ENCODE measurements at regions of chr11 and their contacts with region 1.

Region 1: GRCh38 chr11:86456052-86456939 is 81.6 kb downstream of the CCDC81 start:
- DNase-seq: peak; percentile 12 to 76 (median 44)
- ATAC-seq: peak; percentile 74
- H3K4me3 ChIP-seq: no peak overlapping the region
- H3K4me3 Mint-ChIP-seq: no peak overlapping the region
- H3K27ac ChIP-seq: no peak overlapping the region
- H3K27ac Mint-ChIP-seq: no peak overlapping the region
- H3K4me1 ChIP-seq: no peaks in the 10 kb centered on the region
- H3K4me1 Mint-ChIP-seq: peaks cover 0 to 31% (median 4%) of the 10 kb centered on the region in 7 donors
- H3K27me3 ChIP-seq: no peaks in the 10 kb centered on the region
- H3K27me3 Mint-ChIP-seq: no peaks in the 10 kb centered on the region

Region 2: DNA sequence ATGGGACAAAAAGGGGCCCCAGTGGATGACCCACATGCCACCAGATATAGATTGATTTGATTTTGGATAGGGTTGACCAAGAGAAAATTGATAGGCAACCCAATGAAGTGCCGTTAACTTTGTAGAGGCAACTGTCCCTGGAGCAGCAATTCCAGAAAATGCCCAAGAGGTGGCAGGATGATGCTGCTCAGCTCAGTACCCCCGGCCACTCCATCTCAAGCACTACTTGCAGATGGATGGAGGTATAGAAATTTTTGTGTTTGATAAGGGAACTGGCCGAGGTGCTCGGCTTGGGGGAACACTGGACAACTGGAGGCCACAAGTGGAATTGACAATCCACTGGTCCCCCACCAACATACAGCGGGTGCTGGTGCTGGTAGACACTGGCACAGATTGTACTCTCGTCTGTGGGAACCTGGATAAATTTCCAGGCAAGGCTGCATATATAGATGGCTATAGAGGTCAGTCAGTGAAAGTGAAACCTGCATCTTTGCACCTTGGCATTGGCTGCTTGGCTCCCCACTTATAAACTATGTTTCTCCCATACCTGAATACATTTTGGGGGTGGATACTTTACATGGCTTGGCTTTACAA is 514.8 kb before region 1 on chr11:
- CTCF ChIA-PET with region 1: no interaction called
- POLR2A ChIA-PET with region 1: no interaction called
- intact Hi-C with region 1: loop called in 1 of 2 experiments (anchors 10 kb)
- DNase-seq: no peak
- ATAC-seq: peak; percentile 61
- H3K4me3 ChIP-seq: no peak overlapping the region
- H3K4me3 Mint-ChIP-seq: no peak overlapping the region
- H3K27ac ChIP-seq: no peak overlapping the region
- H3K27ac Mint-ChIP-seq: no peak overlapping the region
- H3K4me1 ChIP-seq: no peaks in the 10 kb centered on the region
- H3K4me1 Mint-ChIP-seq: peaks cover 0 to 10% (median 0%) of the 10 kb centered on the region in 7 donors
- H3K27me3 ChIP-seq: no peaks in the 10 kb centered on the region
- H3K27me3 Mint-ChIP-seq: no peaks in the 10 kb centered on the region

Region 3: GRCh38 chr11:86497181-86497701 is 40.9 kb after region 1 on chr11:
- CTCF ChIA-PET with region 1: no interaction called
- POLR2A ChIA-PET with region 1: no interaction called
- intact Hi-C with region 1: no loop called
- DNase-seq: no peak
- ATAC-seq: no peak
- H3K4me3 ChIP-seq: no peak overlapping the region
- H3K4me3 Mint-ChIP-seq: no peak overlapping the region
- H3K27ac ChIP-seq: no peak overlapping the region
- H3K27ac Mint-ChIP-seq: no peak overlapping the region
- H3K4me1 ChIP-seq: no peaks in the 10 kb centered on the region
- H3K4me1 Mint-ChIP-seq: peaks cover 0 to 2% (median 0%) of the 10 kb centered on the region in 7 donors
- H3K27me3 ChIP-seq: no peaks in the 10 kb centered on the region
- H3K27me3 Mint-ChIP-seq: peaks cover 0 to 3% (median 0%) of the 10 kb centered on the region in 5 donors

Region 4: DNA sequence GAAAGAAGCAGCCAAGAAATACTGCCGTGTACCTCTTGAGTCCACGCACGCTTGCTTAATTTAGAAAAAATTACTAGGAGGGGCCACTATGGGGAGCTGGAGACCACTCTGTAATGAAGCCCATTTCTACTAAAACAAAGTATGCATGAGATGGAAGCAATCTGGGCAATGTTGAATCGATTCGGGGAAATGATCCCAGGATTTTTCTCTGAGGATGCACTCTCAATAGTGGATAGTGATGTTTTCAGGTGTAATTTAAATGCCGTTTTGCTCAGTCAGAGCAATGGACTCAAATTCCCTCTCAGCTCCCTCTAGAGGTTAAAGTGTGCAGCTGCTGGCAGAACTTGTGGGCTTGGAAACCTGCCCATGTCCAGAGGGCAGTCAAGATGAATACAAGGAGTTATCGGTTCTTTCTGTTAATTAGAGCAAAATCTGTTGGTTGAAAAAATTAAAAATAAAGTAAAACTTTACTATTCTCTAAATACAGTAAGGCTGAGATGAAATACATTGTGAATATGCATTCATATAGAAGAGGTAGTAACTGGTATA is 152.0 kb after region 1 on chr11:
- CTCF ChIA-PET with region 1: interaction called, 3 read pairs
- POLR2A ChIA-PET with region 1: no interaction called
- intact Hi-C with region 1: loop called (anchors 1 kb)
- DNase-seq: peak in 2 of 9 donors; percentile 7 to 36
- ATAC-seq: peak; percentile 78
- H3K4me3 ChIP-seq: no peak overlapping the region
- H3K4me3 Mint-ChIP-seq: peak overlapping the region in 1 of 10 donors; percentile 16
- H3K27ac ChIP-seq: no peak overlapping the region
- H3K27ac Mint-ChIP-seq: no peak overlapping the region
- H3K4me1 ChIP-seq: no peaks in the 10 kb centered on the region
- H3K4me1 Mint-ChIP-seq: peaks cover 0 to 14% (median 7%) of the 10 kb centered on the region in 7 donors
- H3K27me3 ChIP-seq: no peaks in the 10 kb centered on the region
- H3K27me3 Mint-ChIP-seq: peaks cover 0 to 4% (median 0%) of the 10 kb centered on the region in 5 donors

Region 5: DNA sequence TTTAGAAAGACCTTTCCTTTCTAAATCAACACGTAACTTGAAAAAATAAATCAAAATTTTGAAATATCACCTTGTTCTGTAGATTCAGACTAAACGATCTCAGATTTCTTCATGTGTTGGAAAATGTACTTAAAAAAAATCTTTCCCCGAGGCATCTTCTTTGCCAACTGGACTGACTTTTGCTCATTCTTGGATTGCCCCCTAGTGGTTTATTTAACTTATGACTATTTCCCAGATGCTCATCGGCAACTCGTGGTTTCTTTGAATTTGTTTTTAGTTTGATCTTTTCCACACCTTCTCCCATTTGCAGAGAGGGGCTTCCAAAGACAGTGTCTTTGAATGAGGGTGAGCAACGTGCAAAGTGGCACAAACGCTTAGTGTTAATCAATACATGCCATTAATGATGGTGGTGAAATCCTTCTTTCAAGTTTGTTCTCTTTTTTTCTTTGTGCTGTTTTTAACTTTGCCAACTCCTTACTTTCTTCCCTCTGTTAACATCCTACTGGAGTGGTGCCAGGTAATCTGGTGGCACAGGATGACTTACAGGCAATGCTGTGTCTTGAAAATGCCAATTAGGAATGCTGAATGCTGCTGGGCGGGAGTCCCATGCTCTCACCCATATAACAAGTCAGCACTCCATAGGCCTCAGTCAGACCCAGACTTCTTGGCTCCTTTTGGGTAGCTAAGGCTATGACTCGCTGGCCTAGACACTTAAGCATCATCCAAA is 362.3 kb after region 1 on chr11:
- CTCF ChIA-PET with region 1: interaction called, 4 read pairs
- POLR2A ChIA-PET with region 1: no interaction called
- intact Hi-C with region 1: loop called (anchors 1 kb)
- DNase-seq: peak in 7 of 9 donors; percentile 13 to 42 (median 34)
- ATAC-seq: peak; percentile 56
- H3K4me3 ChIP-seq: no peak overlapping the region
- H3K4me3 Mint-ChIP-seq: no peak overlapping the region
- H3K27ac ChIP-seq: no peak overlapping the region
- H3K27ac Mint-ChIP-seq: peak overlapping the region in 1 of 9 donors; percentile 39
- H3K4me1 ChIP-seq: no peaks in the 10 kb centered on the region
- H3K4me1 Mint-ChIP-seq: peaks cover 0 to 7% (median 5%) of the 10 kb centered on the region in 7 donors
- H3K27me3 ChIP-seq: no peaks in the 10 kb centered on the region
- H3K27me3 Mint-ChIP-seq: peaks cover 3 to 31% (median 13%) of the 10 kb centered on the region in 5 donors

Region 6: GRCh38 chr11:86919557-86920210 is 463.4 kb after region 1 on chr11:
- CTCF ChIA-PET with region 1: no interaction called
- POLR2A ChIA-PET with region 1: no interaction called
- intact Hi-C with region 1: loop called (anchors 1 to 2 kb)
- DNase-seq: peak in 5 of 9 donors; percentile 2 to 23 (median 13)
- ATAC-seq: peak; percentile 31
- H3K4me3 ChIP-seq: no peak overlapping the region
- H3K4me3 Mint-ChIP-seq: no peak overlapping the region
- H3K27ac ChIP-seq: no peak overlapping the region
- H3K27ac Mint-ChIP-seq: no peak overlapping the region
- H3K4me1 ChIP-seq: peaks cover 0 to 4% of the 10 kb centered on the region in 2 donors
- H3K4me1 Mint-ChIP-seq: peaks cover 0 to 7% (median 4%) of the 10 kb centered on the region in 7 donors
- H3K27me3 ChIP-seq: no peaks in the 10 kb centered on the region
- H3K27me3 Mint-ChIP-seq: peaks cover 0 to 12% (median 0%) of the 10 kb centered on the region in 5 donors

Region 7: GRCh38 chr11:87290304-87290922 is 834.1 kb after region 1 on chr11:
- CTCF ChIA-PET with region 1: no interaction called
- POLR2A ChIA-PET with region 1: no interaction called
- intact Hi-C with region 1: loop called in 1 of 2 experiments (anchors 2 kb)
- DNase-seq: peak in 7 of 9 donors; percentile 1 to 52 (median 44)
- ATAC-seq: no peak
- H3K4me3 ChIP-seq: no peak overlapping the region
- H3K4me3 Mint-ChIP-seq: no peak overlapping the region
- H3K27ac ChIP-seq: no peak overlapping the region
- H3K27ac Mint-ChIP-seq: no peak overlapping the region
- H3K4me1 ChIP-seq: no peaks in the 10 kb centered on the region
- H3K4me1 Mint-ChIP-seq: no peaks in the 10 kb centered on the region
- H3K27me3 ChIP-seq: no peaks in the 10 kb centered on the region
- H3K27me3 Mint-ChIP-seq: no peaks in the 10 kb centered on the region

Measured in naive thymus-derived CD4-positive, alpha-beta T cell (primary cell).